PC-3 (cell line): ENCODE measurements at regions of chr11 and their contacts with region 1.

Region 1: DNA sequence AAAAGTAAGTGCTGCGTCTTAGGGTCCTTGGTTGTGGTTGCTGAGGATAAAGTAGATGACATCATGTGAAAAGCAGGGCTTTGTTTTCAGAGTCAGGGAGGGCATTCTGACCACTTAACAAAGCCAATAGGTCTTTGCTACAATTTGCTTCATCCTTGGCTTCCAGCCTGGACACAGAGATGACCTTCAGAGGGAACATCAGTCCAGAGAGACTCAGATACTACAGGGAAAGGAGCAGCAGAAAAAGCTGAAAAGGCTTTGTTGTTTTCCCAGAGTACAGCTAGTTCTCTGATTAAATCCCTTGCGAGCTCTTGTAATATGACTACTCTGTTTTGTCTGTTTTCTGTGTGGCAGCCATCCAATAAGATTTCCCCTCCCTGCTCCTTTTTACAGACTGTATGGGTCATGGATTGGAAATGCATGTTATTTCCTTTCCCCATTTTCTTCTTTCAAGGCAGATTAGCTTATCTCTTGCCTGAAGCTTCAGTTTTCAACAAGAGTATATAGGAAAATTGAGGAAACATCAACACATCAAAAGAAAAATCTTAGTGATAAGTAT is 31.9 kb downstream of the ATG13 start:
- DNase-seq: peak; percentile 55
- ATAC-seq: peak; percentile 98
- H3K4me3 ChIP-seq: no peak overlapping the region
- H3K27ac ChIP-seq: no peak overlapping the region
- H3K4me1 ChIP-seq: peaks cover 10% of the 10 kb centered on the region
- H3K27me3 ChIP-seq: no peaks in the 10 kb centered on the region
- CTCF ChIP-seq: no peak

Region 2: GRCh38 chr11:46421257-46421880 is 227.9 kb before region 1 on chr11:
- CTCF ChIA-PET with region 1: no interaction called
- POLR2A ChIA-PET with region 1: interaction called, 11 read pairs
- intact Hi-C with region 1: no loop called
- DNase-seq: no peak
- ATAC-seq: no peak
- H3K4me3 ChIP-seq: no peak overlapping the region
- H3K27ac ChIP-seq: no peak overlapping the region
- H3K4me1 ChIP-seq: no peaks in the 10 kb centered on the region
- H3K27me3 ChIP-seq: no peaks in the 10 kb centered on the region
- CTCF ChIP-seq: no peak